ENCODE measurements at regions of chr14 and their contacts with region 1.

Region 1: GRCh38 chr14:101947906-101948665 is 16.3 kb upstream of the DYNC1H1 start:
- DNase-seq: peak; percentile 99 to 100
- ATAC-seq: peak; percentile 93 to 97 (median 93)
- H3K4me3 ChIP-seq: peak overlapping the region; percentile 91
- H3K4me3 Mint-ChIP-seq: peak overlapping the region; percentile 96
- H3K27ac ChIP-seq: peak overlapping the region; percentile 100
- H3K27ac Mint-ChIP-seq: peak overlapping the region; percentile 100
- H3K4me1 ChIP-seq: peaks cover 20% of the 10 kb centered on the region
- H3K4me1 Mint-ChIP-seq: peaks cover 18 to 27% of the 10 kb centered on the region in 2 donors
- H3K27me3 ChIP-seq: peaks cover 2% of the 10 kb centered on the region
- H3K27me3 Mint-ChIP-seq: peaks cover 7 to 11% of the 10 kb centered on the region in 2 donors
- CTCF ChIP-seq: no peak

Region 2: GRCh38 chr14:101721951-101722661 is 226.0 kb before region 1 on chr14:
- intact Hi-C with region 1: loop called (anchors 5 kb)
- DNase-seq: peak; percentile 72 to 95
- ATAC-seq: peak; percentile 55 to 81 (median 70)
- H3K4me3 ChIP-seq: peak overlapping the region; percentile 10
- H3K4me3 Mint-ChIP-seq: peak overlapping the region; percentile 90
- H3K27ac ChIP-seq: peak overlapping the region; percentile 95
- H3K27ac Mint-ChIP-seq: peak overlapping the region; percentile 96 to 100
- H3K4me1 ChIP-seq: peaks cover 76% of the 10 kb centered on the region
- H3K4me1 Mint-ChIP-seq: peaks cover 70 to 72% of the 10 kb centered on the region in 2 donors
- H3K27me3 ChIP-seq: no peaks in the 10 kb centered on the region
- H3K27me3 Mint-ChIP-seq: no peaks in the 10 kb centered on the region
- CTCF ChIP-seq: no peak

Region 3: GRCh38 chr14:101823511-101824120 is 124.5 kb before region 1 on chr14:
- intact Hi-C with region 1: loop called (anchors 1 kb)
- DNase-seq: peak; percentile 63 to 88
- ATAC-seq: peak; percentile 47 to 70 (median 57)
- H3K4me3 ChIP-seq: peak overlapping the region; percentile 48
- H3K4me3 Mint-ChIP-seq: peak overlapping the region; percentile 81
- H3K27ac ChIP-seq: peak overlapping the region; percentile 98
- H3K27ac Mint-ChIP-seq: peak overlapping the region; percentile 97 to 99
- H3K4me1 ChIP-seq: peaks cover 75% of the 10 kb centered on the region
- H3K4me1 Mint-ChIP-seq: peaks cover 86 to 88% of the 10 kb centered on the region in 2 donors
- H3K27me3 ChIP-seq: no peaks in the 10 kb centered on the region
- H3K27me3 Mint-ChIP-seq: no peaks in the 10 kb centered on the region
- CTCF ChIP-seq: no peak

Region 4: GRCh38 chr14:101964297-101965144 is 16.4 kb after region 1 on chr14 and contains the start of gene DYNC1H1:
- intact Hi-C with region 1: loop called (anchors 1 kb)
- DNase-seq: peak; percentile 91 to 95
- ATAC-seq: peak; percentile 85 to 93 (median 89)
- H3K4me3 ChIP-seq: peak within 1 kb of the TSS; percentile 73
- H3K4me3 Mint-ChIP-seq: peak within 1 kb of the TSS; percentile 95
- H3K27ac ChIP-seq: peak within 1 kb of the TSS; percentile 84
- H3K27ac Mint-ChIP-seq: peak within 1 kb of the TSS; percentile 90 to 91
- H3K4me1 ChIP-seq: peaks cover 22% of the 10 kb centered on the region
- H3K4me1 Mint-ChIP-seq: peaks cover 35 to 45% of the 10 kb centered on the region in 2 donors
- H3K27me3 ChIP-seq: no peaks in the 10 kb centered on the region
- H3K27me3 Mint-ChIP-seq: peaks cover 0 to 2% of the 10 kb centered on the region in 2 donors
- CTCF ChIP-seq: no peak
- total RNA-seq, gene DYNC1H1: 313 to 381 (median 349) TPM

Region 5: GRCh38 chr14:101992708-101993107 is 44.6 kb after region 1 on chr14:
- intact Hi-C with region 1: no loop called
- DNase-seq: no peak
- ATAC-seq: no peak
- H3K4me3 ChIP-seq: no peak overlapping the region
- H3K4me3 Mint-ChIP-seq: no peak overlapping the region
- H3K27ac ChIP-seq: no peak overlapping the region
- H3K27ac Mint-ChIP-seq: peak overlapping the region in 1 of 2 donors; percentile 59
- H3K4me1 ChIP-seq: no peaks in the 10 kb centered on the region
- H3K4me1 Mint-ChIP-seq: peaks cover 0 to 12% of the 10 kb centered on the region in 2 donors
- H3K27me3 ChIP-seq: no peaks in the 10 kb centered on the region
- H3K27me3 Mint-ChIP-seq: no peaks in the 10 kb centered on the region
- CTCF ChIP-seq: no peak

Region 6: GRCh38 chr14:102046343-102047278 is 98.5 kb after region 1 on chr14:
- intact Hi-C with region 1: no loop called
- DNase-seq: peak in 1 of 2 donors; percentile 45
- ATAC-seq: peak; percentile 42 to 66 (median 61)
- H3K4me3 ChIP-seq: no peak overlapping the region
- H3K4me3 Mint-ChIP-seq: no peak overlapping the region
- H3K27ac ChIP-seq: no peak overlapping the region
- H3K27ac Mint-ChIP-seq: no peak overlapping the region
- H3K4me1 ChIP-seq: no peaks in the 10 kb centered on the region
- H3K4me1 Mint-ChIP-seq: no peaks in the 10 kb centered on the region
- H3K27me3 ChIP-seq: no peaks in the 10 kb centered on the region
- H3K27me3 Mint-ChIP-seq: no peaks in the 10 kb centered on the region
- CTCF ChIP-seq: no peak

Region 7: DNA sequence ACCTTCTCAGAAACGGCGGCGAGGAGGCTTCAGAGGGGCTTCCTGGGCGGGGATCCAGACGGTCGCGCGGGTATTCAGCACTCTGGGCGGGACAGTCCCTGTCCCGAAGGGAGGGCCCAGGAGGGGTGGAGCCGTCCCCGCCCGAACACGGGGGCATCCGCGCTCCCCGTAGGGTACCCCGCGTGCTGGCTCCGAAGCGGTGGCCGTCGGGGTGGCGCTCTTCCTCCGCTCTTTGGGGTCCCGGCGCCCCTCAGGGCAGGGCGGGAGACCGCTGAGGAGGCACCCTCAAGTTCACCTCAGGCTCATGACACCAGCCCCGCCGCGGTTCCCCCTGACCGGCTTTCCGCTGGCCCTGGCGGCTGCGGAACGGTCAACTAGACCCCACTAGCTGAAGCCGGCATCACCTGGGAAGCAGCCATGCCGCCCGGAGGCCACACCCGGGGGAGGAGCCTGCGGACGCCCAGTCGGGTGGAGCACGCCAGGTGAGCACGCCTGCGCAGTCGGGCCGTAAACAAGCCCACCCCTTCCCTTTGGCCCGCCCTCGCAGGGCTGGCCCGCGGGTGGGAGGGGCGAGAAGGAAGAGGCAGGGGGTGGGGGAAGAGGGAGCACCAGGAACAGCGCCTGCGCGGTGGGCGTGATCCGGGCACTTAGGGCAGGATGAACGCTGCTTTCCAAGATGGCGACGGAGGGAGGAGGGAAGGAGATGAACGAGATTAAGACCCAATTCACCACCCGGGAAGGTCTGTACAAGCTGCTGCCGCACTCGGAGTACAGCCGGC is 191.4 kb after region 1 on chr14 and contains the start of gene WDR20:
- intact Hi-C with region 1: loop called (anchors 1 kb)
- DNase-seq: peak; percentile 95 to 100
- ATAC-seq: peak; percentile 94 to 99 (median 95)
- H3K4me3 ChIP-seq: peak within 1 kb of the TSS; percentile 99
- H3K4me3 Mint-ChIP-seq: peak within 1 kb of the TSS; percentile 96
- H3K27ac ChIP-seq: peak within 1 kb of the TSS; percentile 86
- H3K27ac Mint-ChIP-seq: peak within 1 kb of the TSS; percentile 92 to 96
- H3K4me1 ChIP-seq: peaks cover 14% of the 10 kb centered on the region
- H3K4me1 Mint-ChIP-seq: peaks cover 25 to 28% of the 10 kb centered on the region in 2 donors
- H3K27me3 ChIP-seq: no peaks in the 10 kb centered on the region
- H3K27me3 Mint-ChIP-seq: no peaks in the 10 kb centered on the region
- CTCF ChIP-seq: no peak
- total RNA-seq, gene WDR20: 55.5 to 66.7 (median 62.2) TPM

Region 8: GRCh38 chr14:102262929-102263462 is 314.9 kb after region 1 on chr14:
- intact Hi-C with region 1: no loop called
- DNase-seq: no peak
- ATAC-seq: no peak
- H3K4me3 ChIP-seq: no peak overlapping the region
- H3K4me3 Mint-ChIP-seq: no peak overlapping the region
- H3K27ac ChIP-seq: no peak overlapping the region
- H3K27ac Mint-ChIP-seq: no peak overlapping the region
- H3K4me1 ChIP-seq: no peaks in the 10 kb centered on the region
- H3K4me1 Mint-ChIP-seq: no peaks in the 10 kb centered on the region
- H3K27me3 ChIP-seq: no peaks in the 10 kb centered on the region
- H3K27me3 Mint-ChIP-seq: peaks cover 0 to 3% of the 10 kb centered on the region in 2 donors
- CTCF ChIP-seq: no peak